ENCODE measurements at regions of chr9 and their contacts with region 1.

Region 1: GRCh38 chr9:37485389-37486219 is at the start of gene POLR1E:
- DNase-seq: peak; percentile 99

Region 2: GRCh38 chr9:37465249-37466036 is 20.2 kb before region 1 on chr9 and contains the start of gene ZBTB5:
- CTCF ChIA-PET with region 1: no interaction called
- POLR2A ChIA-PET with region 1: interaction called, 27 read pairs
- DNase-seq: peak; percentile 96